Psoas muscle (tissue), 8 donors: ENCODE measurements at regions of chr12 and their contacts with region 1.

Region 1: DNA sequence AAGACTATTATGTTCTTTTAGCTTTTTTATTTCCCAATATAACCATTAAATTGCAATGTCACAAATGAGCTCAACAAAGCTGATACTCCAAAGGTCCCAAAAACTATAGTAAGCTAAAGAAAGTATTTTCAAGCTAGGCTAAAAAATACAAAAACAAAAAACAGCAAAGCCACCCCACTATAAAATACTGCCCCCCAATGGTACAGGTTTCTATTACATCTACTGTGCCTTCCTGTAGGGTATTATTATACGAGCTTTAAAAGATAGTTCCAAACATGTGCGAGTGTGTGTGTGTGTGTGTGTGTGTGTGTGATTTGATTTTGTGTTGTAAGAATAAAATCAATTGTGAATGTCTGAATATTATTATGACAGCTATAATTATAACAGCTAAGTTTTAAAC is 1.1 kb downstream of the IFNG start:
- DNase-seq: no peak
- ATAC-seq: peak in 3 of 4 donors; percentile 52 to 86 (median 77)
- H3K4me3 ChIP-seq: no peak overlapping the region
- H3K27ac ChIP-seq: no peak overlapping the region
- H3K4me1 ChIP-seq: no peaks in the 10 kb centered on the region
- H3K27me3 ChIP-seq: no peaks in the 10 kb centered on the region
- CTCF ChIP-seq: peak; percentile 49

Region 2: DNA sequence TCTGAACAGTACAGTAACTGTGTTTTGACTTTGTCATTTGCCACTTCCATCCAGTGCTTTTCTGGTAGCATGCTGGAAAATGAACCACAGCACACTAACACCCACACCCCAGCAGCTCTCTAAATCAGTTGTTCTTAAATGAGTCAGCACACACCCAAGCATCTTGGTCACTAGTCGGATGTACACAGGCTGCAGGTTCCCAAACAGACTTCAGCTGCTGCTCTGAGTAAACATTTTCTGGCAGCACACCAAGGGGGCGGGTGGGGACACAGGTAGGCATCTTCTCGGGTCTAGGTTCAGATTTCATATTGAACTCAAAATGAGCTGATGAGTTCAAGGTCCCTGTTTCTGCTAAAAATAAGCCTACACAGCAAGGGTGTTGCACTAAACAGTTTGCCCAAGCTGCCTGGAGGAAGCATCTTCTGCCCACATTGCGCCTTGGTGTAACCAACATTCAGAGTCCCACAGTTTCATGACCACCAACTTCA is 38.7 kb before region 1 on chr12:
- intact Hi-C with region 1: loop called in 1 of 2 experiments (anchors 5 kb)
- DNase-seq: no peak
- ATAC-seq: peak; percentile 29 to 68 (median 52)
- H3K4me3 ChIP-seq: no peak overlapping the region
- H3K27ac ChIP-seq: peak overlapping the region; percentile 30
- H3K4me1 ChIP-seq: peaks cover 10% of the 10 kb centered on the region
- H3K27me3 ChIP-seq: no peaks in the 10 kb centered on the region
- CTCF ChIP-seq: no peak

Region 3: GRCh38 chr12:68185598-68185997 is 27.2 kb after region 1 on chr12:
- intact Hi-C with region 1: no loop called
- DNase-seq: no peak
- ATAC-seq: no peak
- H3K4me3 ChIP-seq: no peak overlapping the region
- H3K27ac ChIP-seq: no peak overlapping the region
- H3K4me1 ChIP-seq: no peaks in the 10 kb centered on the region
- H3K27me3 ChIP-seq: no peaks in the 10 kb centered on the region
- CTCF ChIP-seq: no peak

Region 4: DNA sequence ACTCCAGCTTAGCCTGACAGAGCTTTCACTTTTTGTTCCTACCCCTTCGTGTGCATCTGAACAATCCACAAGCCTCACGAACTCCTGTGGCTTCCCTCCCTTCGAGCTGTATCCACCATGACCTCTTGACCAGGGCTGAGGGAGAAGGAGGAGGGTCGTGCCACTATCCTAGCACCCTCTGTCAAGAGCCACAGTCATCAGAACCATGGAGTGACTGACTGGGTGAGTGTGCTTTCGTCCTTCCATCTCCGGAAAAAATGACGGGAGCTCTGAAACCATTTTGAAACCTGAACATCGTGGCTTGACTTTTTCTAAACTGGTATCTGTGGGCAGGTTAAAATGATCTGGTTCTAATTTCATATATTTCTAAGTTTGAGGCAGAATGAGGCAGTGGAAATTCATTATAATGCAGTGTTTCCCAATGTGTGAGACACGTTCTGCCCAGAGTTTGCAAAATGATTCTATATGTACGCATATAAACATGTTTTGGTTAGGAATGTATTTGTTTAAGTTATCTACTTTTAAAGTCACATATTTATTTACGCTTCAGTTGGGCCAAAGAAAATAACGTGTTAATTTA is 40.2 kb after region 1 on chr12:
- intact Hi-C with region 1: no loop called
- DNase-seq: no peak
- ATAC-seq: no peak
- H3K4me3 ChIP-seq: no peak overlapping the region
- H3K27ac ChIP-seq: no peak overlapping the region
- H3K4me1 ChIP-seq: no peaks in the 10 kb centered on the region
- H3K27me3 ChIP-seq: no peaks in the 10 kb centered on the region
- CTCF ChIP-seq: no peak